Mammary epithelial cell (primary cell): ENCODE measurements at regions of chr4 and their contacts with region 1.

Region 1: DNA sequence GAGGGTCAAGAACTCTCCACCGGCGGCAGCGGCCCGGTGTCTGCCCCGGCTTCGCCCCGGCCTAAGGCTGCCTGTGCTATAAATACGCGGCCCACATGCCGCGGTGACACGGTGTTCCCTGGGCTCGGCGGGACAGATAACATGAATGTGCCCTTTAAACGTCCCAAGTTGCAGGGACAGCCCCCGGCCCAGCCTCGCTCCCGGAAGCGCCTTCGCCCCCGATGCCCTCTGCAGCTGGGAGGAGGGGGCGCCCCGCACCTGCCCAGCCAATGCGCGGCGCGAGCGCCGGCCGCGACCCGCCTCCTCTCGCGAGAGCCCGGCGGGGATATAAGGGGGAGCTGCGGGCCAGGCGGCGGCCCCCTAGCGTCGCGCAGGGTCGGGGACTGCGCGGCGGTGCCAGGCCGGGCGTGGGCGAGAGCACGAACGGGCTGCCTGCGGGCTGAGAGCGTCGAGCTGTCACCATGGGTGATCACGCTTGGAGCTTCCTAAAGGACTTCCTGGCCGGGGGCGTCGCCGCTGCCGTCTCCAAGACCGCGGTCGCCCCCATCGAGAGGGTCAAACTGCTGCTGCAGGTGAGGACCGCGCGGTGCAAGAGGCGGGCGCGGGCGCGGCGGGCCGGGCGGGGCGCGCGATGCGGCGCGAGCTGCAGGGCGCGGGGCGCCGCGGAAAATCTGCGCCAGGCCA is at the start of gene SLC25A4:
- DNase-seq: peak; percentile 65
- H3K4me3 ChIP-seq: peak within 1 kb of the TSS; percentile 56 to 87 (median 82)
- H3K27ac ChIP-seq: no peak within 1 kb of the TSS
- H3K4me1 ChIP-seq: no peaks in the 10 kb centered on the region
- H3K27me3 ChIP-seq: no peaks in the 10 kb centered on the region
- CTCF ChIP-seq: peak in 1 of 2 donors; percentile 43
- total RNA-seq, gene SLC25A4: 12.3 to 15.8 TPM

Region 2: GRCh38 chr4:185183619-185184281 is 40.7 kb after region 1 on chr4:
- CTCF ChIA-PET with region 1: no interaction called
- dilution Hi-C with region 1: no loop called
- in situ Hi-C with region 1: no loop called
- intact Hi-C with region 1: loop called (anchors 2 kb)
- DNase-seq: peak; percentile 66
- H3K4me3 ChIP-seq: no peak overlapping the region
- H3K27ac ChIP-seq: no peak overlapping the region
- H3K4me1 ChIP-seq: no peaks in the 10 kb centered on the region
- H3K27me3 ChIP-seq: no peaks in the 10 kb centered on the region
- CTCF ChIP-seq: peak; percentile 80 to 85

Region 3: DNA sequence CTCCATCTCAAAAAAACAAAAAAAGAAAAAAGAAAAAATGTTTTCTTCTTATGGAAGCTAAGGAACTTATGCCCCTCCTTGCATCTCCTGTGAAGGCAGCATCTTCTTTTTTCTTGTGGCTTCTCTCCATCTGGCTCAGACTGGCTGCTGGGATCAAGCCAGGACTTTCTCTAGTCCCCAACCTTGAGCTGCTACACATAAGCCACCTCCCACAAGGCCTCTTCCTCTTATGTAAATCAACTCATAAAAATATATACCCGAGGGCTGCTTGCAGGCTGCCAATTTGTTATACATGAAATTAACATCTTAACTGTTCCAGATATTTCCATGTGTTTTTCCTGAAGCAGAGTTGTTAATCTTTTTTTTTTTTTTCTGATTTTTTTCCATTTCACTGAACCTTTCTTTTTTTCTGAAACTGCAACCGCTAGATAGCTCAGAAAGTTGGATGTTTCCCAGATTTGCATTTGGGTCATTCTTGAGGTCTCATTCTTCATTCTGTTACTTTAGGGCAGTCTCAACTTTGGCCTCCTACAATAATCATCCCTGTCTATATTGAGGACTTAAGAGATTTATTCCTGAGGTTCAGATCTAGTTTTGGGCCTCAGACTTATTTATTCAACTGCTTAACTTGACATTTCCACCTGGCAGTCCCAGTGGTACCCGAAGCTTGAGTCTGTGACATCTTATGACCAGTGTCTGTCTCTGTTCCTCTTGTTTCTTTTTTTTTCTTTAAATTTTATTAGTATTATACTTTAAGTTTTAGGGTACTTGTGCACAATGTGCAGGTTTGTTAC is 76.7 kb after region 1 on chr4:
- CTCF ChIA-PET with region 1: no interaction called
- dilution Hi-C with region 1: loop called (anchors 5 kb)
- in situ Hi-C with region 1: no loop called
- intact Hi-C with region 1: no loop called
- DNase-seq: no peak
- H3K4me3 ChIP-seq: no peak overlapping the region
- H3K27ac ChIP-seq: no peak overlapping the region
- H3K4me1 ChIP-seq: no peaks in the 10 kb centered on the region
- H3K27me3 ChIP-seq: no peaks in the 10 kb centered on the region
- CTCF ChIP-seq: no peak

Region 4: DNA sequence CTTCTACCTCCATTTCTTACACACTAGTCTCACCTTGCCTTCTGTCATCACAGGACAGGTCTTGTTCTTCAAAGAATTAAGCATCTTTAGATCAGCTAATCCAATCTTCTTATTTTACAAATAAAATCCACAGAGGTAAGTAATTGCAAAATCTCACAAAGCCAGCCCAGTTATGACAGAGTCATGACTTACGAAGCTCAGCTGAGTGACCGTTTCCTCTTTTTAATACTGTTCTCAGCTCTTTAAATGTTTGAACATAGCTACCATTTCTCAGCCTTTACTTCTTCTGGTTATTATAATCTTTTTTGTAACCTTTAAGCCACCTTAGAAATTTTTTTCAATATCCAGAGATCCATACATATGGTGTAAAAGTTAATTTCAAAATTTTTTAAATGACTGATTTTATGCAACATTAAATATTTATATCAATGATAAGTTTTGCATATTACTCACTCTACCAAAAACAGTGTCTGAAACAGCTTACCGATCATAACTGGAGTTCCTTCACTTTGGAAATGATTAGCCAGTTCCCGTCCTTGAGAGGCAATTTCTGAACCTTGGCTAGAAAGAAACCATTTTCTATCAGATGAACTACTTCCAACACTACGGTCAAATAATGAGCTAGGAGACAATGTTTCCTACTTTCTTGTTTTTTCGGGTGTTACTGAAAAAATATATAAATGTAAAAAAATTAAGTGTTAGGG is 262.4 kb after region 1 on chr4:
- CTCF ChIA-PET with region 1: no interaction called
- dilution Hi-C with region 1: no loop called
- in situ Hi-C with region 1: no loop called
- intact Hi-C with region 1: no loop called
- DNase-seq: no peak
- H3K4me3 ChIP-seq: no peak overlapping the region
- H3K27ac ChIP-seq: no peak overlapping the region
- H3K4me1 ChIP-seq: no peaks in the 10 kb centered on the region
- H3K27me3 ChIP-seq: no peaks in the 10 kb centered on the region
- CTCF ChIP-seq: no peak

Region 5: DNA sequence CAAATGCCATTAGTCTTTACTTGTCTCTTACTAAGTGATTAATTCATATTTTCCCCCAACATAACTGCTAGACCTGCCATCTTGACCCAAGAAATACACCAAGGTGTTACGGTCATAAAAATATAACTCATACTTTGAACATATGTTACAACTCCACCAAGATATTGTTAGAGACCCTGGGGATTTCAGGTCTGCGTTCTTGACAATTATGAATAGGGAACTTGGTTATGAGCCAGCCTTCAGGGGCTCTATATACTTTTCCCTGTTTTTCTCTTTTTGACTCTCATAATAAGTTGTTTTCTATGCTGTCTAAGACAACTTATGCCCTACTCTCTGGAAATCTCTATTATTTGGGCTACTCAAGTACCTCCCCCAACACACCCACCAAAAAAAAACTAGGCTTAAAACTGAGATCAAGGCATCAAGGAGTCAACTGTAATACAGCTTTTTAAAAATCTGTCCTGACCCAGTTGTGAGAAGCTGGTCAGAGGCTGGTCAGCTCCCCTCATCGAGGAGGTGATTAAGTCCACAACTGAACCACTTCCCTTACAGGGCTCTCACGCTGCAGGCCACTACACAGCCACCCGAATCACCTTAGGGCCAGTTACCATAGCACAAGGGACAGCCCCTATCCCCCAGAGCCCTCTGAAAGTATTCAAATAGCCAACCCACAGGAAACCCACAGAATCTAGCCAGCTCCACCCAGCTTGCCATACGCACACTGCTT is 915.4 kb after region 1 on chr4:
- CTCF ChIA-PET with region 1: no interaction called
- dilution Hi-C with region 1: no loop called
- in situ Hi-C with region 1: no loop called
- intact Hi-C with region 1: no loop called
- DNase-seq: no peak
- H3K4me3 ChIP-seq: no peak overlapping the region
- H3K27ac ChIP-seq: no peak overlapping the region
- H3K4me1 ChIP-seq: no peaks in the 10 kb centered on the region
- H3K27me3 ChIP-seq: no peaks in the 10 kb centered on the region
- CTCF ChIP-seq: no peak